Activated CD4-positive, alpha-beta memory T cell treated with anti-CD3 and anti-CD28 coated beads for 36 hours (primary cell): ENCODE measurements at regions of chr1 and their contacts with region 1.

Region 1: GRCh38 chr1:62082456-62083363 is 111.9 kb upstream of the L1TD1 start:
- DNase-seq: peak; percentile 49
- H3K4me3 Mint-ChIP-seq: no peak overlapping the region
- H3K27ac Mint-ChIP-seq: no peak overlapping the region
- H3K4me1 Mint-ChIP-seq: no peaks in the 10 kb centered on the region
- H3K27me3 Mint-ChIP-seq: no peaks in the 10 kb centered on the region

Region 2: DNA sequence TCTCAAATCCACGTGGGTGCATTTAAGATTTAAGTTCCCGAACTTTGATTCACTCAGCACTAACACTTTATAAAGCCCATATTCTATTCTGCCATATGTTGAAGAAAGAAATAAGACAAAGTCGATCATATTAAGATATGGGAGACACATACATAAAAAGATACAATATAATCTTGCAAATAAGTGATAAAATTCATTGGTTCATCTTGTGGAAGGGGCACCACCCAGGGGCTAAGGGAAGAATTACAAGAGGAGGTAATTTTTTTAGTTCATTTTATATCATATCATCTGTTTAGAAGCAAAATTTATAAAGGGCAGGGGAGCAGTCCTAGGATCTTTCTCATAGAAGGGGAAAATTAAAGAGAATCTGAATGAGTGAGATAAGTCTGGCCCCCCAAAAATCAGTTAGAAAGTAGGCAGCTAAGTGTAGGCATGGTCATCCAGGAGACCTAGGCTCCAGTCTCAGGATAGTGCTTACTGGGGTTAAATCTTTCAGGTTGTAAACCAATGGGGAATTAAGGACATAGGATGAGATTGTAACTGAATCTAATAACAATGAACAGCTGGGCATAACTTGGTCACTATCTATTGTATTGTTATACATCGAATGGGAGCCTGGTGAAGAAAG is 12.2 kb before region 1 on chr1:
- CTCF ChIA-PET with region 1: interaction called, 15 read pairs
- POLR2A ChIA-PET with region 1: no interaction called
- intact Hi-C with region 1: no loop called
- DNase-seq: peak; percentile 10
- H3K4me3 Mint-ChIP-seq: no peak overlapping the region
- H3K27ac Mint-ChIP-seq: no peak overlapping the region
- H3K4me1 Mint-ChIP-seq: no peaks in the 10 kb centered on the region
- H3K27me3 Mint-ChIP-seq: no peaks in the 10 kb centered on the region

Region 3: DNA sequence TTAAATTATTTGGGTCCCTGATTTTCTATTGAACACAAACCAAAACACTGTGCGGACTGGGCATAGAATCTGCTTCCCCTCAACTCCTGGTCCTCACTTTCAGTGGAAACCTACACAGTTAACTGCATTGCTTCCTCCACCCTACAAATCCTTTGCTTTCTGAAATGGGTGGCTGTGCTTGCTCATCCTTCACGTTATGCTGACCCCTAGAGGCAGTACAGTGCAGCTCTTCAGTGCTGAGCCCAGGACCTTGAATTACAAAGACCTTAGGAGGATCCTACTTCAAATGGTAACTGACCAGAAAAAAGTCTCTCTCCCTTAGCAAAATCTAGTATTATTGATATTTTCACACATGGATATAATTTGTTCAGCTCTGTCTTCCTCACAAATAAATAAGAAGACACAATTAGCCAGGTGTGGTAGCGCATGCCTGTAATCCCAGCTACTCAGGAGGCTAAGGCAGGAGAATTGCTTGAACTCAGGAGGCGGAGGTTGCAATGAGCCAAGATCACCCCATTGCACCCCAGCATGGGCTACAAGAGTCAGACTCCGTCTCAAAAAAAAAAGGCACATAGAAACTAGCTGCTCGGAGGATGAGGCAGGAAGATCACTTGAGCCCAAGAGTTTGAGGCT is 48.5 kb after region 1 on chr1:
- CTCF ChIA-PET with region 1: interaction called, 17 read pairs
- POLR2A ChIA-PET with region 1: interaction called, 3 read pairs
- intact Hi-C with region 1: loop called (anchors 1 kb)
- DNase-seq: peak; percentile 45
- H3K4me3 Mint-ChIP-seq: no peak overlapping the region
- H3K27ac Mint-ChIP-seq: no peak overlapping the region
- H3K4me1 Mint-ChIP-seq: no peaks in the 10 kb centered on the region
- H3K27me3 Mint-ChIP-seq: no peaks in the 10 kb centered on the region

Region 4: GRCh38 chr1:62144238-62144831 is 61.6 kb after region 1 on chr1:
- CTCF ChIA-PET with region 1: interaction called, 38 read pairs
- POLR2A ChIA-PET with region 1: no interaction called
- intact Hi-C with region 1: no loop called
- DNase-seq: peak; percentile 43
- H3K4me3 Mint-ChIP-seq: no peak overlapping the region
- H3K27ac Mint-ChIP-seq: no peak overlapping the region
- H3K4me1 Mint-ChIP-seq: no peaks in the 10 kb centered on the region
- H3K27me3 Mint-ChIP-seq: no peaks in the 10 kb centered on the region

Region 5: GRCh38 chr1:62407405-62408009 is 324.8 kb after region 1 on chr1:
- CTCF ChIA-PET with region 1: interaction called, 4 read pairs
- POLR2A ChIA-PET with region 1: no interaction called
- intact Hi-C with region 1: loop called (anchors 1 kb)
- DNase-seq: no peak
- H3K4me3 Mint-ChIP-seq: no peak overlapping the region
- H3K27ac Mint-ChIP-seq: no peak overlapping the region
- H3K4me1 Mint-ChIP-seq: no peaks in the 10 kb centered on the region
- H3K27me3 Mint-ChIP-seq: no peaks in the 10 kb centered on the region